ENCODE measurements at regions of chr14 and their contacts with region 1.

Region 1: GRCh38 chr14:69712599-69713088 is 54.3 kb upstream of the SRSF5 start:
- DNase-seq: peak; percentile 45
- ATAC-seq: peak; percentile 64
- H3K4me3 Mint-ChIP-seq: peak overlapping the region; percentile 21; the same call in 1 of the 2 replicates
- H3K27ac Mint-ChIP-seq: peak overlapping the region; percentile 97
- H3K4me1 Mint-ChIP-seq: peaks cover 72% of the 10 kb centered on the region
- H3K27me3 Mint-ChIP-seq: no peaks in the 10 kb centered on the region
- CTCF ChIP-seq: no peak

Region 2: GRCh38 chr14:69586404-69586803 is 126.2 kb before region 1 on chr14:
- CTCF ChIA-PET with region 1: interaction called, 13 read pairs
- POLR2A ChIA-PET with region 1: no interaction called
- DNase-seq: no peak
- ATAC-seq: no peak
- H3K4me3 Mint-ChIP-seq: no peak overlapping the region
- H3K27ac Mint-ChIP-seq: no peak overlapping the region
- H3K4me1 Mint-ChIP-seq: peaks cover 4% of the 10 kb centered on the region
- H3K27me3 Mint-ChIP-seq: no peaks in the 10 kb centered on the region
- CTCF ChIP-seq: no peak

Region 3: DNA sequence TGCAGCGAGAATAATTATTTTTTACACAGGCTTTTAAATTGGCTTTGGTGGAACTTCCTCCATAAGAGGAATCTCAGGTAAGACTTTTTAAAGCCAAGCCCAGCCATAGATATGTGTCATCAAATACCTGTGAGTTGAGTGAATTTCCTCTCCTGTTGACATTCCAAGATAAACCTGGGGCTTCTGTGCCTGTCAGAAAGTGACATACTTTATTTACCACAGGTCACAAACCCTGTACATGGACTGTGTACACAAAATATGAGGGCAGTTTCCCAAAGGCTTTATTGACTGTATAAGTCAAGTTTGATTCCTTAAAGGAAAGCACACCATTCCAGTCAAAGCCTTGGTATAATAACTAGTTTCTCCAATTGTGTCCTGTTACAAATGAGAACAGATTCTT is 28.4 kb after region 1 on chr14:
- CTCF ChIA-PET with region 1: no interaction called
- POLR2A ChIA-PET with region 1: no interaction called
- DNase-seq: no peak
- ATAC-seq: no peak
- H3K4me3 Mint-ChIP-seq: no peak overlapping the region
- H3K27ac Mint-ChIP-seq: no peak overlapping the region
- H3K4me1 Mint-ChIP-seq: peaks cover 15% of the 10 kb centered on the region
- H3K27me3 Mint-ChIP-seq: no peaks in the 10 kb centered on the region; the same call in 1 of the 2 replicates
- CTCF ChIP-seq: no peak

Region 4: GRCh38 chr14:69780952-69781351 is 68.3 kb after region 1 on chr14:
- CTCF ChIA-PET with region 1: no interaction called
- POLR2A ChIA-PET with region 1: no interaction called
- DNase-seq: no peak
- ATAC-seq: no peak; the same call in 1 of the 2 replicates
- H3K4me3 Mint-ChIP-seq: no peak overlapping the region
- H3K27ac Mint-ChIP-seq: no peak overlapping the region
- H3K4me1 Mint-ChIP-seq: no peaks in the 10 kb centered on the region
- H3K27me3 Mint-ChIP-seq: no peaks in the 10 kb centered on the region
- CTCF ChIP-seq: no peak

Measured in WTC11 (cell line).